IMR-90 (cell line): ENCODE measurements at regions of chr1 and their contacts with region 1.

Region 1: GRCh38 chr1:39196244-39197215 is 8.0 kb upstream of the MACF1 start:
- DNase-seq: peak; percentile 50
- ATAC-seq: no peak
- H3K4me3 ChIP-seq: no peak overlapping the region
- H3K27ac ChIP-seq: no peak overlapping the region
- H3K4me1 ChIP-seq: peaks cover 18% of the 10 kb centered on the region
- H3K27me3 ChIP-seq: no peaks in the 10 kb centered on the region
- CTCF ChIP-seq: no peak
- POLR2A ChIP-seq: no peak
- RAD21 ChIP-seq: no peak

Region 2: GRCh38 chr1:39105061-39105840 is 91.3 kb before region 1 on chr1:
- CTCF ChIA-PET with region 1: interaction called, 7 read pairs
- POLR2A ChIA-PET with region 1: interaction called, 5 read pairs
- dilution Hi-C with region 1: no loop called
- in situ Hi-C with region 1: loop called (anchors 5 kb)
- intact Hi-C with region 1: loop called (anchors 1 kb)
- DNase-seq: peak; percentile 59
- ATAC-seq: peak; percentile 76
- H3K4me3 ChIP-seq: peak overlapping the region; percentile 95
- H3K27ac ChIP-seq: peak overlapping the region; percentile 97
- H3K4me1 ChIP-seq: peaks cover 19% of the 10 kb centered on the region
- H3K27me3 ChIP-seq: no peaks in the 10 kb centered on the region
- CTCF ChIP-seq: no peak
- POLR2A ChIP-seq: peak; percentile 39; the same call in 1 of the 2 replicates
- RAD21 ChIP-seq: no peak

Region 3: DNA sequence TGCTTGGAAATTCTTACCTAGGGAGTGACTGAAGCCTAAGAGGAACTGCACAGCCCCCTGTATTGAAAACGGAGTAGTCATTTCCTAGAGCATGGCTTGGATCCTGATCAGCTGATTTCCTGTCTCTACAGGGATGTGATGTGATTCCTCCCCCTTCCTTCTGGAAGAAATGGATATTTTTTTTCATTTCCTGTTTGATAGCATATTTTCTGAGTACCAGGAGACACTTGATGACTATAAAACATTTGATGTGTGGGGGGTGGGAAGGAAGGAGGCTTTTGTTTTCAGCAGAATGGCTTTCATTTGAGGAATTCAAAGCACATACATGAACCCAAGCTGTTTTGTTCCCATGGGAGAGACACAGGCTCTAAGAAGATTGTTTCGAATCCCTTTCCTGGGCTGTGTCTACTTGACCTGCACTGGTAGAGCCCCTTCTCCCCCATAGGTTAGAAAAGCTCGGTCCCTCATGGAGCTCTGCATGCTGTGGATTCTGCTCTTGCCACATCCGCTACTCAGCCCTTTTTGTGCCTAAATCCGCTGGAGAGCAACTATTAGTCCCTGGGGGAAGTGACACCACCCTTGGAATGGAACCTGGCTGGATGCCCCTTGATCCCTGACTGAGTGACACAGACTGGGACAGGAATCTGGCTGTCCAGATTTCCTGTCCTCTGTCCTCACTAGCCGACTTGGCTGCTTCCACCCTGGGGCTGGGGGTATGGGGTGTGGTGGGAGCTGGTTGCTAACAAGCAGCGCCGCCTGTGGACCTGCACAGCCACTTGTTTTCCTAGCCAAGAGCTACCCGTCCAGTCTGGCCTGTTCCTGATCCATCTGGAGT is 63.8 kb before region 1 on chr1:
- CTCF ChIA-PET with region 1: interaction called, 5 read pairs
- POLR2A ChIA-PET with region 1: interaction called, 3 read pairs
- dilution Hi-C with region 1: no loop called
- in situ Hi-C with region 1: no loop called
- intact Hi-C with region 1: loop called (anchors 1 kb)
- DNase-seq: peak; percentile 57
- ATAC-seq: peak; percentile 22
- H3K4me3 ChIP-seq: no peak overlapping the region
- H3K27ac ChIP-seq: peak overlapping the region; percentile 51
- H3K4me1 ChIP-seq: peaks cover 37% of the 10 kb centered on the region
- H3K27me3 ChIP-seq: no peaks in the 10 kb centered on the region
- CTCF ChIP-seq: no peak
- POLR2A ChIP-seq: no peak
- RAD21 ChIP-seq: no peak

Region 4: GRCh38 chr1:39142401-39143151 is 54.0 kb before region 1 on chr1:
- CTCF ChIA-PET with region 1: interaction called, 11 read pairs
- POLR2A ChIA-PET with region 1: interaction called, 9 read pairs
- dilution Hi-C with region 1: no loop called
- in situ Hi-C with region 1: no loop called
- intact Hi-C with region 1: loop called (anchors 1 kb)
- DNase-seq: no peak
- ATAC-seq: peak; percentile 74
- H3K4me3 ChIP-seq: no peak overlapping the region
- H3K27ac ChIP-seq: peak overlapping the region; percentile 96
- H3K4me1 ChIP-seq: peaks cover 26% of the 10 kb centered on the region
- H3K27me3 ChIP-seq: no peaks in the 10 kb centered on the region
- CTCF ChIP-seq: no peak
- POLR2A ChIP-seq: no peak
- RAD21 ChIP-seq: no peak

Region 5: GRCh38 chr1:39158327-39159086 is 38.0 kb before region 1 on chr1:
- CTCF ChIA-PET with region 1: interaction called, 16 read pairs
- POLR2A ChIA-PET with region 1: interaction called, 4 read pairs
- dilution Hi-C with region 1: no loop called
- in situ Hi-C with region 1: no loop called
- intact Hi-C with region 1: no loop called
- DNase-seq: peak; percentile 74
- ATAC-seq: peak; percentile 61
- H3K4me3 ChIP-seq: peak overlapping the region; percentile 34; the same call in 1 of the 2 replicates
- H3K27ac ChIP-seq: peak overlapping the region; percentile 88
- H3K4me1 ChIP-seq: peaks cover 38% of the 10 kb centered on the region
- H3K27me3 ChIP-seq: no peaks in the 10 kb centered on the region
- CTCF ChIP-seq: no peak; the same call in 1 of the 2 replicates
- POLR2A ChIP-seq: no peak
- RAD21 ChIP-seq: no peak

Region 6: DNA sequence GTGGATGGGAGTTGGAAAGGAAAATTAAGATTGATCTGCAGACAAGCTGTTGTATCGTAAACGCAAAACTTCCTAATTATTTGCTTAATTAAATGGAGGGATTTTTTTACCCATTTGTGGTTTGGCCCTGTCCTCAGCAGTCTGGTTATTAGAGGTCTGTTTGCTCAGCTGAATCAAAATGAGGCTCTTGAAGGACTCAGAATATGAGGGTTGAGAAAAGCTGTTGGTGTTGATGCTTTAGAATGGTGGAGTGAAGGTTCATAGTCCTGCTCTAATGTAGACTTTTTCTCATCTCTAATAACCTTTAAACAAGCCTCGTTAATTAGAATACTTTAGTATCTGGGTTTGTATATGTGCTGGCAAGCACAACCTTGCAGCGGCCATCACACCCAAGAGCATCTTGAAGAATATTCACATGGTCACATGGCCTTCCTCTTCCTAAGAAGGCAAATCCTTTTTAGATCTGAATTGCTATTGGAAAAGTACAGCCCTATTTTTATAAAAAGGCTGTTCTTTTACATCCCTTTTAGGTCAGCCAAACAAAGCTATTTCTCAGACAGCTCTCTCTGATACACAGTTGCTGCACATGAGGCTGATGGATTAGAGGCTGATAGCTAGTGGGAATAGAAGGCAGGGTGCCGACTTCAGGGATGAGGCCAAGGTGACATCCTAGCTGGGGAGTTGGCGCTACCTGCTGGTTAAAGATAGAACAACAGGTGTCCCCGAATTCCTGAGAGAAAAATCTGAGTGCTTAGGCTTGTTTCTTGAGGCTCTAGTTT is 61.8 kb after region 1 on chr1:
- CTCF ChIA-PET with region 1: interaction called, 16 read pairs
- POLR2A ChIA-PET with region 1: no interaction called
- dilution Hi-C with region 1: no loop called
- in situ Hi-C with region 1: loop called (anchors 5 kb)
- intact Hi-C with region 1: loop called (anchors 1 kb)
- DNase-seq: peak; percentile 65
- ATAC-seq: peak; percentile 57
- H3K4me3 ChIP-seq: no peak overlapping the region
- H3K27ac ChIP-seq: no peak overlapping the region
- H3K4me1 ChIP-seq: peaks cover 10% of the 10 kb centered on the region
- H3K27me3 ChIP-seq: no peaks in the 10 kb centered on the region
- CTCF ChIP-seq: peak; percentile 72
- POLR2A ChIP-seq: no peak
- RAD21 ChIP-seq: peak; percentile 86

Region 7: GRCh38 chr1:39391691-39392679 is 195.5 kb after region 1 on chr1:
- CTCF ChIA-PET with region 1: interaction called, 14 read pairs
- POLR2A ChIA-PET with region 1: no interaction called
- dilution Hi-C with region 1: no loop called
- in situ Hi-C with region 1: no loop called
- intact Hi-C with region 1: no loop called
- DNase-seq: peak; percentile 90
- ATAC-seq: peak; percentile 57
- H3K4me3 ChIP-seq: no peak overlapping the region
- H3K27ac ChIP-seq: peak overlapping the region; percentile 80
- H3K4me1 ChIP-seq: peaks cover 32% of the 10 kb centered on the region
- H3K27me3 ChIP-seq: no peaks in the 10 kb centered on the region
- CTCF ChIP-seq: no peak
- POLR2A ChIP-seq: no peak
- RAD21 ChIP-seq: no peak